Activated CD4-positive, alpha-beta T cell treated with anti-CD3 and anti-CD28 coated beads for 36 hours (primary cell): ENCODE measurements at regions of chr7 and their contacts with region 1.

Region 1: DNA sequence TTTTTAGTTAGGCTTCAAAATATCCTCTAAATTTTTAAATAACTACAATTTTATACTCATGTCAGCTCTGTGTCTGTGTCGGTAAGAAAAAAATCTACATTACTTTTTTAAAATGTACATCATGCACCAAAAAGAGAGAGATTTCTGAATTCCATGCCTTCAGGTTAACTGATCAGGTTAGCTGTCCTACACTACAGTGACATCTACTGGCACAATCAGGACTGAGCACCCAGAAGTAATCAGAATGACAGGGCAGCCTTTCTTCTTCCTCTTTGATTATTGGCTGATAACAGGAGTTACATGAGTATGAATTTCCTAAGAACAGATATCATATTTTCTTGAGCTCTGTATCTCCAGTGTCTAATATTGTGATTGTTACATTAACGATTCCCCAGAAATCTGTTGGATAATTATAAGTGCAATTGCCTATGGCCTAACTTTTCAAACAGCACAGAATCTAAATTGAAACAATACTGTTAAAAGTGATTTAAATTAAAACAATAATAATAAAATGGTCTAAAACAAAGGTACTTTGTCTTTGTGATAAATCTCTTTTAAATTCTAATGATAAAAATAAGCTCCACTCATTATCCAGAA is 41.8 kb upstream of the HYCC1 start:
- DNase-seq: peak; percentile 71
- ATAC-seq: peak; percentile 99
- H3K4me3 Mint-ChIP-seq: no peak overlapping the region
- H3K27ac Mint-ChIP-seq: no peak overlapping the region
- H3K4me1 Mint-ChIP-seq: peaks cover 2% of the 10 kb centered on the region
- H3K27me3 Mint-ChIP-seq: no peaks in the 10 kb centered on the region

Region 2: DNA sequence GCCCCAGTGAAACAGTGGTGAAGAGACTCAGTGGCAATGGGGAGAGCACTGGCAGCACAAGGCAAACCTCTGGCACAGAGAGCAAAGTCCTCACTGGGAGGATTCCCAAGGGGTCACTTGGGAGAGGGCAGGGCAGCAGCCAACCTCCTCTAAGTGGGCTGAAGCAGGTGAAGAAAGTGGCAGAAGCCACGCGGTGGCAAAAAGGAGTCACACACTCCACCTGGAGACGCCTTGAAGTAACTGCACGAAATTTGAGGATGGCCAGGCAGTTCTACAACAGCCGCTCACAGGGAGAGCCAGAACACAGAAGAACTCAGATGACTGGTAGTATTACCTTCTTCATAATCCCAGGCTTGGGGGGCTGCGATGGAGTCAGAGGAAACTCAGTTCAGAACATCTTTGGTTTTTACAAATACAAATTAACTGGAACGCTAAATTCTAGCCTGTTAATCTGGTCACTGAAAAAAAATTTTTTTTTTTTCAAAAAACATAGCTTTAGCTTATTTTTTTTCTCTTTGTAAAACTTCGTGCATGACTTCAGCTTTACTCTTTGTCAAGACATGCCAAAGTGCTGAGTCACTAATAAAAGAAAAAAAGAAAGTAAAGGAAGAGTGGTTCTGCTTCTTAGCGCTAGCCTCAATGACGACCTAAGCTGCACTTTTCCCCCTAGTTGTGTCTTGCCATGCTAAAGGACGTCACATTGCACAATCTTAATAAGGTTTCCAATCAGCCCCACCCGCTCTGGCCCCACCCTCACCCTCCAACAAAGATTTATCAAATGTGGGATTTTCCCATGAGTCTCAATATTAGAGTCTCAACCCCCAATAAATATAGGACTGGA is 329.1 kb before region 1 on chr7:
- CTCF ChIA-PET with region 1: interaction called, 17 read pairs
- POLR2A ChIA-PET with region 1: no interaction called
- intact Hi-C with region 1: loop called (anchors 2 to 10 kb)
- DNase-seq: peak; percentile 79
- ATAC-seq: peak; percentile 92
- H3K4me3 Mint-ChIP-seq: peak overlapping the region; percentile 51
- H3K27ac Mint-ChIP-seq: peak overlapping the region; percentile 61
- H3K4me1 Mint-ChIP-seq: peaks cover 28% of the 10 kb centered on the region
- H3K27me3 Mint-ChIP-seq: peaks cover 31% of the 10 kb centered on the region

Region 3: DNA sequence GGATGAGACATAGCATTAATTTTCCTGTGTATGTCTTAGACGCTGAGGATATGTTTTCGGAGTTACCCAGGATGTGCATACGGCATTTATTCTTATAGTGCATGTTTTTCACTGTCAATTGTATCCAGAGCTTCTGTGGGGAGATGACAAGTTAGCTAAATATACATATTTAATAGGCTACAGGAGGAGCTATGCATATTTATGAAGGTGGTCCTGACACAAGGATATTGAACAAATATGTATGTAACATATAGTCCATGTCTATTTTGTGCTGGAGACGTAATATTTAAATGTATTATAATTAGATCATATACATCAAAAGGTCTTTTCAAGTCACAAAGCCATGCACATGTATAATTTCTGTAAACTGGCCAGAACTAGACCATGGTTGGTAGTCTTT is 312.7 kb before region 1 on chr7:
- CTCF ChIA-PET with region 1: no interaction called
- POLR2A ChIA-PET with region 1: no interaction called
- intact Hi-C with region 1: no loop called
- DNase-seq: no peak
- ATAC-seq: no peak
- H3K4me3 Mint-ChIP-seq: no peak overlapping the region
- H3K27ac Mint-ChIP-seq: no peak overlapping the region
- H3K4me1 Mint-ChIP-seq: no peaks in the 10 kb centered on the region
- H3K27me3 Mint-ChIP-seq: peaks cover 17% of the 10 kb centered on the region

Region 4: GRCh38 chr7:22809902-22810642 is 245.6 kb before region 1 on chr7:
- CTCF ChIA-PET with region 1: interaction called, 3 read pairs
- POLR2A ChIA-PET with region 1: no interaction called
- intact Hi-C with region 1: loop called in 1 of 2 experiments (anchors 5 kb)
- DNase-seq: no peak
- ATAC-seq: no peak
- H3K4me3 Mint-ChIP-seq: no peak overlapping the region
- H3K27ac Mint-ChIP-seq: no peak overlapping the region
- H3K4me1 Mint-ChIP-seq: peaks cover 3% of the 10 kb centered on the region
- H3K27me3 Mint-ChIP-seq: no peaks in the 10 kb centered on the region

Region 5: DNA sequence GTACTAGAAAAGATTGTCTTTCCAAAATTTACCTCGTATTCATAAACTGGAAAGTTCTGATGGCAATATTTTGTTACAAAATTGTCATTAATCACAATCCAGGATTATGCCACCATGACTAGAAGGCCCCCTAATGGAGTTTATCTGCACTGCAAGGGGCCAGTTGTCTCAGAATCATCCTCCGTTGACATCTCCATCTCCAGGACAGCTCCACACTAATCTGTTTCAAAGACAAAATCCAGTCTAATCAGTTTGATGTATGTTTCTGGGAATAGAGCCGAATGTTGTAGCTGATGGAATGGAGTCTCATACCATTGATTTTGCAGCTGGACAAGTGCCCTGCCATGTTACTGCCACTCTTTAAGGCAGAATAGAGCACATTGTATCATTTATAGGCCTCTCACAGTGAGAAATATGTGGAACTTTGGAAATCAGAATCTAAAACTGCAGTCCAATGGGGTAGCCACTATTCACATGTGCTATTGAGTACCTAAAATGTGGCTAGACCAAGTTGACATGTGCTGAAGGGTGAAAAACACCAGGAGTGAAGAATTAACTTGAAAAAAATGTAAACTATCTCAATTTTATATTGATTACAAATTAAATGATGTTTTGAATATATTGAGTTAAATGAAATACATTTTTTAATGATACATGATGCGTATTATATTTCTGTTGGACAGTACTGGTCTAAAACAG is 194.7 kb before region 1 on chr7:
- CTCF ChIA-PET with region 1: interaction called, 28 read pairs
- POLR2A ChIA-PET with region 1: no interaction called
- intact Hi-C with region 1: no loop called
- DNase-seq: peak; percentile 45
- ATAC-seq: peak; percentile 44
- H3K4me3 Mint-ChIP-seq: no peak overlapping the region
- H3K27ac Mint-ChIP-seq: peak overlapping the region; percentile 51
- H3K4me1 Mint-ChIP-seq: peaks cover 51% of the 10 kb centered on the region
- H3K27me3 Mint-ChIP-seq: no peaks in the 10 kb centered on the region

Region 6: DNA sequence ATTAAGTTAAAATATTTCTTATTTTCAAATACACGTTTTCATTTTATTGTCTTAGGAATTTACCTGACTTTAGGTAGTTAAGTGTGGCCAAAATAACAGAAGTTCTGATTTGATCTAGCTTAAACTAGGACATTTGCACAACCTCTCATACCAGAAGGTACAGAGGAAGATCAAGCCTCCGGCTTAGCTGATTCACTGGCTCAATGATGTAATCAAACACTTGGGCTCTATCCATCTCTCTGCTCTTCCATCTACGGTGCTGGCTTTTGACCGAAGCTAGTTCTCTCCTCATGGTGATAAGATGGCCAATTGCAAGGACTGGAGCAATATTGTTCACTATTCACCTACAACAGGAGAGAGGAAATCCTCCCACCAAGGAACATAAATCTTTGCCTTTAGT is 29.5 kb before region 1 on chr7:
- CTCF ChIA-PET with region 1: interaction called, 26 read pairs
- POLR2A ChIA-PET with region 1: no interaction called
- intact Hi-C with region 1: no loop called
- DNase-seq: no peak
- ATAC-seq: no peak
- H3K4me3 Mint-ChIP-seq: no peak overlapping the region
- H3K27ac Mint-ChIP-seq: no peak overlapping the region
- H3K4me1 Mint-ChIP-seq: peaks cover 17% of the 10 kb centered on the region
- H3K27me3 Mint-ChIP-seq: peaks cover 5% of the 10 kb centered on the region